Right ventricle myocardium inferior (tissue), 1 donor: ENCODE measurements at regions of chr12 and their contacts with region 1.

Region 1: DNA sequence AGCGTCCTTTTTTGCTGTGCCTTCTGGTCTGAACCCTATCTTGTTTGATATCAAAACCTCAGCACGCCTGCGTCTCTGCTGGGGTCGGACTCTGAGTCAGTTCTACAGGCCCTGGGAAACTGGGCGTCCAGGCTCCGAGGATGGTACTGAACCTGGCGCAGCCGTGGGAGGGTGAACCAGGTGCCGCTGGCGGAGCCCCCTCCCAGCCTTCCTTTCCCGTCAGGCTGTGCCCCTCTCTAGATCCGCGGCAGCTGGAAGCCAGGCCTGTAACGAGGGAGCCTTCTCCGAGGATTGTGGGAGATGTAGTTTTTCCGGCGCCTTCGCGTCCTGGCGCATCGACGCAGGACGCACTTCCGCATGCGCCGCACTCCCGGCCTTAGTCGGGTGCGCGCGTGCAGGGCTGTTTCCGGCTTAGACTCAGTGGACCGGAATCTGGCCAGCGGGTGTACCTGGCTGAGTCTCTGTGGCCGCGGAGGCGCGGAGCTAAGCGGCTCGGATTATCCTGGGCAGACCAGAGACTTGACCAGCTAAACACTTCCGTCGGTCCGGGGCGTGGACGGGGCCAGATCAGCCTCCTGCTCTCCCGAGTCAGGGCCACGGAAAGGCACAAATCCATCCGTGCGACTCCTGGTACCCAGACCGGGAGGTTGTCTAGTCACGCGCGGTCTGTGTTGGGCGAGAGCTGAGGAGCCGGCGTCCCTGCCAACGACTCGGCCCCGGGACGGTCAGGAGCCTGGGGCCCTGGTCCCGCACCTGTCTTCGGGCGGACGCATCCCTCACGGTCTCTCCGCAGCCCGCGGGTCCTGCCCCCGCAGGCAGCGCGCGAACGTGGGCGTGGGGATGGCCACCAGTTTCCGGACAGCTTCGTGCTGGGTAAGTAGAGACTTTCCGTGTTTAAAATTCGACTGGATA is at the start of gene ZNF26:
- DNase-seq: peak; percentile 96
- ATAC-seq: peak; percentile 99
- total RNA-seq, gene ZNF26: 4.4 TPM

Region 2: GRCh38 chr12:132956011-132956788 is 30.1 kb before region 1 on chr12 and contains the start of gene ZNF605:
- intact Hi-C with region 1: loop called (anchors 1 kb)
- DNase-seq: peak; percentile 95
- ATAC-seq: peak; percentile 96
- total RNA-seq, gene ZNF605: 13.1 TPM

Region 3: GRCh38 chr12:133037207-133038005 is 51.1 kb after region 1 on chr12 and contains the start of gene ZNF84:
- intact Hi-C with region 1: loop called (anchors 2 kb)
- DNase-seq: peak; percentile 97
- ATAC-seq: peak; percentile 99
- total RNA-seq, gene ZNF84: 15.1 TPM

Region 4: DNA sequence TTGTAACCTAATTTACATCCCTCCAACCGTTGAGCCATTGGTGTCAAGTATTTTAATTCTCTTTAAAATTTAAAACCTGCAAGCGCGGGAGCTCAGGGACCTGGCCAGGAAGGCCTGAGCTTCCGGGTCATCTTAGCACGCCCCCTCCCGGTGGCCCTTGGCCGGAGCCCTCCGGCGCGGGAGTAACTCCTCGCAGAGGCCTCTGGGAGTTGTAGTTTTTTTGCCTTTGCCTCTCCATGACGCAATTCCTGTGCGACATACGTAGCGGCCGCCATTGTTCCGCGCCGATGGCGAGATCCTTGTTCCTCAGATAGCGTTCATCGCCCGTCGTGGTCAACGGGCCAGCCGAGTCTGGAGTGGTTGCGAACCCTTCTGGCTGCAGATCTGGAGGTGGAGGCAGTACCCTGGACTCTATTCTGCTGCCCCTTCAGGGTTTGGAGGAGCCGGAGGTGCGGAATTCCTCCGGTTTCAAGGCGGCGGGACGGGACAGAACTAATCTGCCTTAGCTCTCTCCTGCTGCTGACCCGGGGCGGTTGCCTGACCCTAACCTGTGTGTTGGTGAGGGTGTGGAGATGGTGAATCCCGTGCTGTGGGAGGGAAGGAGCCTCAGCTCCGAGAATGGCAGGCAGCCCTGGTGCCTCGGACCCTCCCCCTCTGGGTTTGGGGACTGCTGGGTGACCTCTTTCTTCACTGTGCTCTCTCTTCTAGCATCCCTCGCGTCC is 195.1 kb after region 1 on chr12 and contains the start of gene ZNF268:
- intact Hi-C with region 1: loop called (anchors 1 kb)
- DNase-seq: peak; percentile 94
- ATAC-seq: peak; percentile 98
- total RNA-seq, gene ZNF268: 6.8 TPM